ENCODE measurements at regions of chr3 and their contacts with region 1.

Region 1: DNA sequence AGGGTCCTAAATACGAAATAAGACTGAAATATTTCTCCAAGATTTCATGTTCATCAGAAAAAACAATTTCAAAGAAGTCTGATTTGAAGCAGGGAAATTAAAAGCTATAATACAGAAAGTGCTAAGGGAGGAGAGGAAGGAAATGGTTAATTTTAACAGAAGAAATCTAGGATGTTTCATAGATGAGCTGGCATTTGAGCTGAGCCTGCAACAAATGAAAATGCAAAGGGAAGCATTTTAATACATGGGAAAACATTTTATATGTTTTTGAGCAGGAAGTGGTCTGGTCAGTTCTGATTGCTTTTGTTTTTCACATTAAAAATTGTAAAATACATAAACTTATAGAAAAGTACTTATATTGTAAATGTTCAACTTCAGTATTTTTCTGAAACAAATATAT is 17.2 kb upstream of the RAP2B start:
- DNase-seq: peak in 1 of 2 experiments; percentile 71
- H3K4me3 ChIP-seq: no peak overlapping the region
- H3K27ac ChIP-seq: peak overlapping the region; percentile 53
- H3K4me1 ChIP-seq: peaks cover 44% of the 10 kb centered on the region
- H3K27me3 ChIP-seq: no peaks in the 10 kb centered on the region
- CTCF ChIP-seq: no peak

Region 2: GRCh38 chr3:152969561-152970240 is 175.1 kb before region 1 on chr3:
- CTCF ChIA-PET with region 1: no interaction called
- POLR2A ChIA-PET with region 1: no interaction called
- intact Hi-C with region 1: loop called (anchors 5 kb)
- DNase-seq: peak; percentile 24 to 91
- H3K4me3 ChIP-seq: no peak overlapping the region
- H3K27ac ChIP-seq: peak overlapping the region; percentile 23
- H3K4me1 ChIP-seq: peaks cover 48% of the 10 kb centered on the region
- H3K27me3 ChIP-seq: no peaks in the 10 kb centered on the region
- CTCF ChIP-seq: no peak

Region 3: GRCh38 chr3:153087595-153088566 is 56.9 kb before region 1 on chr3:
- CTCF ChIA-PET with region 1: no interaction called
- POLR2A ChIA-PET with region 1: interaction called, 16 read pairs
- intact Hi-C with region 1: no loop called
- DNase-seq: peak in 1 of 2 experiments; percentile 67
- H3K4me3 ChIP-seq: no peak overlapping the region
- H3K27ac ChIP-seq: no peak overlapping the region
- H3K4me1 ChIP-seq: peaks cover 7% of the 10 kb centered on the region; the same call in 1 of the 2 replicates
- H3K27me3 ChIP-seq: no peaks in the 10 kb centered on the region
- CTCF ChIP-seq: no peak